ENCODE measurements at regions of chr15 and their contacts with region 1.

Region 1: DNA sequence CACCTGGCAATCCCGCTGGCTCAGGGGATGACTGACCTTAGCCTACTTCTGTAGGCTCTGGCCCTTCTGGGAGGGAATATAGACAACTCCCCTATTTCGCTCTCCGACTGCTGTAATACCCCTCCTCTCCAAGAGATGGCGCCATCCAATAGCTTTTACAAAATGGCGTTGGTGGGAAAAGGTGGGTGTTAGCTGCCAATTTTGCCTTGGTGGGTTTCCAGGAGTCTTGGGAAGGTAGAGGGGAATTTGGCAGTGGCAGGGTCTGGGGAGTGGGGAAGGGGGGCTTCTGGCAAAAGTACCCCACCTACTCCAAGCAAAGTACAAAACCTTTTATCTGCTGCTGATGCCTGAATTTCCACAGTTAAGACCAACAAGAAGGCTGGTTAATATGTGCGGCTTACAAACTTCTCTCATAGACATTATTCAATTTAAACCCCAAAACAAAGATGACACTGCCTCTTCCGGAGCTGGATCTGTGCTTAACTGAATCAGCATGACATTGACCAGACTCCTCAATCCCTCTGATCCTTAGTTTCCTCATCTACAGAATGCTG is 62.1 kb downstream of the RASGRF1 start:
- DNase-seq: no peak
- H3K4me3 ChIP-seq: no peak overlapping the region
- H3K27ac ChIP-seq: no peak overlapping the region
- H3K4me1 ChIP-seq: peaks cover 7% of the 10 kb centered on the region
- H3K27me3 ChIP-seq: no peaks in the 10 kb centered on the region
- CTCF ChIP-seq: peak; percentile 80 to 95 (median 81)

Region 2: GRCh38 chr15:79184465-79184892 is 156.0 kb after region 1 on chr15:
- dilution Hi-C with region 1: loop called (anchors 25 kb)
- DNase-seq: no peak
- H3K4me3 ChIP-seq: no peak overlapping the region
- H3K27ac ChIP-seq: no peak overlapping the region
- H3K4me1 ChIP-seq: no peaks in the 10 kb centered on the region
- H3K27me3 ChIP-seq: no peaks in the 10 kb centered on the region
- CTCF ChIP-seq: peak; percentile 87 to 96 (median 94)